ENCODE measurements at regions of chr2 and their contacts with region 1.

Region 1: DNA sequence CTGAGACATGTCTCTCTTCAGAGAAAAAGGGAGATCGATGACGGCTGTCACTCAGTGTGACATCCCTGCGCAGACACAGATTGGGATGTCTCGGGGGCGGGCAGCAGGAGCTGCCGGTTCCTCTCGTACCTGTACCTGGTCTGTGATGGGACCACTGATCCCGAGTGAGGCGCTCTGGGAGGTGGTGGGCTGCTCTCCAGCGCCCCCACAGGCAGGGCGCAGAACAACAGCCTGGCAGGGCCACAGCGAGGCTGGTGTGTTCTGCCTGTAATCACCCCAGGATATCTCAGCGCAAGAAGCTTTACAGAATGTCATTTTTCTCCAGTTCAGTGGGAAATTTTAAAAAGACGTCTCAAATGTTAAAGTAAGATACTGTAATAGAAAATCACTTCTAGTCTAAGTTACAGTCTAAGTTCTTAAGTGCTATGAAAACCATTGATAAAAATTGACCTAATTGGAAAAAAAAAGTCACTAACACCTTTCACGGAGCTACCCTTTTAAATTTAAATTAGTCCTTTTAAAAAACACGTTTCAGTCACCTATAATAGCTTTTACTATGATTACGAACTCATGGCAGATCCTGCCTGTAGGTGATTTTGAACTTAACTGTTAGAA is 189.8 kb downstream of the SNTG2 start:
- H3K4me3 ChIP-seq: no peak overlapping the region
- H3K27ac ChIP-seq: no peak overlapping the region
- H3K4me1 ChIP-seq: no peaks in the 10 kb centered on the region
- CTCF ChIP-seq: peak; percentile 65

Region 2: GRCh38 chr2:636641-637405 is 503.7 kb before region 1 on chr2:
- CTCF ChIA-PET with region 1: no interaction called
- POLR2A ChIA-PET with region 1: no interaction called
- H3K4me3 ChIP-seq: no peak overlapping the region
- H3K27ac ChIP-seq: no peak overlapping the region
- H3K4me1 ChIP-seq: no peaks in the 10 kb centered on the region
- CTCF ChIP-seq: peak; percentile 58; the same call in 1 of the 2 replicates

Region 3: GRCh38 chr2:953975-954686 is 186.4 kb before region 1 on chr2:
- CTCF ChIA-PET with region 1: interaction called, 12 read pairs
- POLR2A ChIA-PET with region 1: no interaction called
- H3K4me3 ChIP-seq: no peak overlapping the region
- H3K27ac ChIP-seq: no peak overlapping the region
- H3K4me1 ChIP-seq: no peaks in the 10 kb centered on the region
- CTCF ChIP-seq: peak; percentile 20; the same call in 1 of the 2 replicates

Region 4: DNA sequence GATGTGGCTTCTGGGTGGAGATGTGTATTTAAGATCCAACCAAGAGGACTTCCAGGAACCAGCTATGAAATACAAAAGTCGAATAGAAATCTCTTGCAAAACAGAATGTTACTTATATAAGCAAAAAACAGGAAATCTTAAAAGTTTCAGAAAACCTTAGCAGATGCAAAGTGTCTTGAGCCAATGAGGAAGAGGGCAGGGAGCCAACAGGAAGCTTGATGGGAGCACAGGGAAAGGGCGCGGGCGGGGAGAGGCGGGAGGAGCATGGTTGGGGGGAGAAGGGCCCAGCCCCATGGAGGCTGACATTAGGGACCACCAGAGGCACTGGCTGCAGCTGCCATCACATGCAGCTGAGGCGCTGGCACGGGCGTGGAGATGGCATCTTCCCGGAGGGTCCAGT is 13.4 kb after region 1 on chr2:
- CTCF ChIA-PET with region 1: interaction called, 11 read pairs
- POLR2A ChIA-PET with region 1: no interaction called
- H3K4me3 ChIP-seq: no peak overlapping the region
- H3K27ac ChIP-seq: no peak overlapping the region
- H3K4me1 ChIP-seq: no peaks in the 10 kb centered on the region
- CTCF ChIP-seq: no peak

Measured in HEK293 (cell line).